MCF 10A (cell line): ENCODE measurements at regions of chr6 and their contacts with region 1.

Region 1: DNA sequence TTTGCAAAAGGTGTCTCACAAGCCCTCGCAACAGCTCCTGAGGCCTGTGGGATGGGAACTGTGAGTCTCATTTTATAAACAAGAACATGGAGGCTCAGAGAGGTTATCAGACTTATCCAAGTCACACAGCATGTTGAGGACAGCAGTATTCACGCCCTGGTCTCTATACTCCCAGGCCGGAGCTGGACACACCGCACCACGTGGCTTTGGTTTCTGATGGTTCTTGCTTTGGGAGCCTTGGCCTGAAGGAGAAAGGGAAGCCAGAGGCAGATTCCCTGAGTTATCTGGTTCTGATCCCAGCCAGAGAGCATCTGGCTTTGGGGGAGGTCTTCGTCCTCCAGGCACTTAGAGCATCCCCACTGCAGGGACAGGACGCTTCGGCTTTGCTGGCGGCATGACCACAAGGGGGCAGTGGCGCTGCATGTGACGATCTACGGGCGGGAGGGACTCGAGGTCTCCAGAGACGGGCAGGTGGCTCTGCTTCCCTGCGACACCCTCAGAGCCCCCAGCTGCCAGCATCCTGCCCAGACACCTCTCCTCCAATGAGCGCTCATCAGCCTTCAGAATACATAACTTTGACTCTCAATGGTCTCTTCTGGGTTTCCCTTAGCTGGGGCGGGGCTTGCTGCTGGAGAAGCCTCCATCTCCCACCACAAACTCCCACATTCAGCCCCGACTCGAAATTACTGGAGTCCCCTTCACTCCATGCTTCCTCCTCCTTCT is 51.4 kb upstream of the SAYSD1 start:
- DNase-seq: peak; percentile 68
- H3K4me3 Mint-ChIP-seq: no peak overlapping the region
- H3K27ac Mint-ChIP-seq: no peak overlapping the region
- H3K4me1 Mint-ChIP-seq: peaks cover 18% of the 10 kb centered on the region
- H3K27me3 Mint-ChIP-seq: peaks cover 2% of the 10 kb centered on the region
- CTCF ChIP-seq: peak; percentile 99

Region 2: GRCh38 chr6:38871741-38872568 is 294.4 kb before region 1 on chr6:
- CTCF ChIA-PET with region 1: interaction called, 32 read pairs
- POLR2A ChIA-PET with region 1: no interaction called
- intact Hi-C with region 1: loop called (anchors 5 kb)
- DNase-seq: peak; percentile 66
- H3K4me3 Mint-ChIP-seq: no peak overlapping the region
- H3K27ac Mint-ChIP-seq: no peak overlapping the region
- H3K4me1 Mint-ChIP-seq: peaks cover 6% of the 10 kb centered on the region
- H3K27me3 Mint-ChIP-seq: no peaks in the 10 kb centered on the region
- CTCF ChIP-seq: peak; percentile 77

Region 3: DNA sequence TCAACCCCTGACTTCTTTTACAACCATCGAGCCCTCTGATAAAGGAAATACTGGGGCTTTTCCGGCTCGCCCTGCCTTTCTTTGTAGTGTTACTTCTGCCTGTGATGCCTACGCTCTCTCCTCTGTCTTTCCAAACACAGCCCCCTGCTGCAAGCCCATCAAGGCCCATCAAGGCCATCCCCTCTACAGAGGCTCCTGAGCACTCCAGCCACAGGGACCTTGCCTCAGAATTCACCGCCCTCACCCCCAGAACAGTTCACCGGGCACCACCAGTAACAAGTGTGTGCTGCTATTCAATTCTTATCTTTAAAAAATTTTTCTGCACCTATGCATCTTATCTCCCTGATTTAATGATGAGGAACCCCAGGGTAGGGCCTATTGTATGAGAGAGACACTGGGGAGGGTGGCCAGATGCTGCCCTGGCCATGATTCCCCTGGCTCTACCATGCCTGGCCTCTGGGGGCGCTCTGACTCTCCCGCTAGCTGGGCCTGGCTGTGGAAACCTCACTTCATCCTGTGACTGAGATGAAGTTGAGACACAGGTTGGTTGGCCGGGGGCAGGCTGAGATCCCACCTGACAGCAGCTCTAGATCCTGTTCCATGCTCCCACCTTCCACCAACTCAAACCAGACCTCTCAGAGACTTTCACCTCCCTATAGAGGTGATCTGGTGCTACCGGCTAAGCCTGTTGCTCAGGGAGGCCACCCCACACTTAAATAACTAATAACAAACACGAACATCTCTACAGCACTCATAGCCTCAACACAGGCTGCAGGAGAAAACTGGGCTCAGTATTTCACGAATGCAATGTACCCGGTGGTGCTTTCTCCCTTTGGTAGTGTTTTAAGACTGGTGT is 137.0 kb before region 1 on chr6:
- CTCF ChIA-PET with region 1: no interaction called
- POLR2A ChIA-PET with region 1: no interaction called
- intact Hi-C with region 1: loop called (anchors 5 kb)
- DNase-seq: peak; percentile 42
- H3K4me3 Mint-ChIP-seq: no peak overlapping the region
- H3K27ac Mint-ChIP-seq: no peak overlapping the region
- H3K4me1 Mint-ChIP-seq: no peaks in the 10 kb centered on the region
- H3K27me3 Mint-ChIP-seq: peaks cover 65% of the 10 kb centered on the region
- CTCF ChIP-seq: peak; percentile 75

Region 4: GRCh38 chr6:39189915-39190544 is 23.7 kb after region 1 on chr6:
- CTCF ChIA-PET with region 1: interaction called, 12 read pairs
- POLR2A ChIA-PET with region 1: interaction called, 3 read pairs
- intact Hi-C with region 1: loop called (anchors 2 kb)
- DNase-seq: peak; percentile 54
- H3K4me3 Mint-ChIP-seq: no peak overlapping the region
- H3K27ac Mint-ChIP-seq: peak overlapping the region; percentile 40
- H3K4me1 Mint-ChIP-seq: peaks cover 17% of the 10 kb centered on the region
- H3K27me3 Mint-ChIP-seq: no peaks in the 10 kb centered on the region
- CTCF ChIP-seq: peak; percentile 38

Region 5: DNA sequence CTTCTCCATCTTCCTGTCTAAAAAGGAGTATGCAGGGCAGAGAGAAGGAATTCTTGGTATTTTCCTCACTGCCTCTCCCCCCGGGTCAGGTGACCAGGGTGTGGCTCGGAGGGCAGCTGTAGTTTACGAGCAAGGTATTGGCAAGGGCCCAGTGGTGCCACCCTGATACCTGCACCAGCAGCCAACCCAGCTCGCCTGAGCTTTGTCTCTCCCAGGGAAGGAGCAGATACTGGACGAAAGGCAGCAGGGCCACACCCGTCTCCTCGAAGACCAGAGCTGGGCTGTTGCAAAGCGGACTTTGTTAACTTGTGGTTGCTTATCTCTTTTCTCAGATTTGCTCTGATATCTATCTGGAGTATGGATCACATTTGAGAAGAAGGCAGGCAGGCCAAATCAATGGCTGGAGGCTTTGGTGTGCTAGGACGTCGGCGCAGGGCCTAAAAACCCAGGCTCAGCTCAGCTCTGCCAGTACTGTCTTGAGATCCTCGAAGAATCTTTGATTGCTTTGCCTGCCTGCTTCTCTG is 37.6 kb after region 1 on chr6:
- CTCF ChIA-PET with region 1: interaction called, 10 read pairs
- POLR2A ChIA-PET with region 1: interaction called, 3 read pairs
- intact Hi-C with region 1: no loop called
- DNase-seq: peak; percentile 84
- H3K4me3 Mint-ChIP-seq: no peak overlapping the region
- H3K27ac Mint-ChIP-seq: peak overlapping the region; percentile 59
- H3K4me1 Mint-ChIP-seq: peaks cover 20% of the 10 kb centered on the region
- H3K27me3 Mint-ChIP-seq: no peaks in the 10 kb centered on the region
- CTCF ChIP-seq: no peak

Region 6: DNA sequence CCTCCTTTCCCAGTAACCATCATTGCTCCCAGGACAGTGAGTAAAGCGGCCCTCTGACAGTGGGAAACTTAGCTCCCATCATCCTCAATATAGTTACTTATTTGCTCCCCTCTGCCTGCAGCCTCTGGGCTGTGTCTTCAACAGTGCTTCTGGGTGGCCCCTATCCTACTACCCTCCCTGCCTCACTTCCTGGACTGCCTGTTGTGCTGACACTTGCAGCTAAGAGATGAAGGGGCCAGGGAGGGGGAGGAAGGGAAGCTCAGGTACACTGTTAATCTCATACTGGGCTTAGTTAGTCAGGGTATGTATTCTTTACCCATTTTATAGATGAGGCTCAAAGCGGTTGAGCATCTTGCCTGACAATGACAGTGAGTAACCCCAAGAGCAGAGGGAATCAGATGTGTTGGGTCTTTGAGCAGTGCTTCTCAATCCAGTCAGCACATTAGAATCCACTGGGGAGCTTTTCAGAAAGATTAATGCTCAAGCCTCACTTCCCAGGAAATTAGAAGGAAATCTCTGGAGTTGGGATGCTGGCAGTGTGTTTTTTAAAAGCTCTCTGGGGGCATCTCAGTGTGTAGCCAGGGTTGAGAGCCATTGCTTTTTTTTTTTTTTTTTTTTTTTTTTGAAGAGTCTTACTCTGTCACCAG is 90.1 kb after region 1 on chr6:
- CTCF ChIA-PET with region 1: interaction called, 14 read pairs
- POLR2A ChIA-PET with region 1: no interaction called
- intact Hi-C with region 1: no loop called
- DNase-seq: no peak
- H3K4me3 Mint-ChIP-seq: no peak overlapping the region
- H3K27ac Mint-ChIP-seq: no peak overlapping the region
- H3K4me1 Mint-ChIP-seq: no peaks in the 10 kb centered on the region
- H3K27me3 Mint-ChIP-seq: peaks cover 30% of the 10 kb centered on the region
- CTCF ChIP-seq: no peak

Region 7: DNA sequence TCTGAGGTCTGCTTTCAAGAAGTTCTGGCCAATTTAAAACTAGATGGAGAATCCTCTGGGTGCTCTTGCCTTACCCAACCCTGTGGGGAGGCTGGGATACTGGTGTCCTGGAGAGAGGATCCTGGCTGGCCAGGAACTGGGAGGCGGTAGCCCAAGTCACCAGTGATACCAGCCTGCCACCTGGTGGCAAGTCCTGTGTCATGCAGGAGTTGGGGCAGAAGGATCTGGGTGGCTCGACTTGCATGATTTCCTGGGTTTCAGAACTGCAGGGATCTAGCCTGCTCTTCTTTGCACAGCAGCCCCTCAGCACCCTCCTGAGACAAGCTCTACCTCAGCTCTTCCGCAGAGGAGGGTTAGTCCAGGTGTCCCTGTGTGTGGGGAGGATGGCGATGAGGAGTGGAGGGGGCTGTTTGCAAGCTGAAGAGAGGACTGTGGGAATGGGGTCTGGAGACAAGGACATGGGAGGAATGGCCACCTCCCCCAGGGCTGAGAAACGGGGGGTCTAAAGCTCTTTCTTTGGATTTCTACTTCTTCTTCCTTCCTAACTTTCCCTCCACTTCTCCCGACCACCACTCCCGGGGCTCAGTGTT is 143.7 kb after region 1 on chr6:
- CTCF ChIA-PET with region 1: interaction called, 625 read pairs
- POLR2A ChIA-PET with region 1: interaction called, 3 read pairs
- intact Hi-C with region 1: loop called (anchors 1 kb)
- DNase-seq: peak; percentile 78
- H3K4me3 Mint-ChIP-seq: no peak overlapping the region
- H3K27ac Mint-ChIP-seq: no peak overlapping the region
- H3K4me1 Mint-ChIP-seq: no peaks in the 10 kb centered on the region
- H3K27me3 Mint-ChIP-seq: peaks cover 14% of the 10 kb centered on the region
- CTCF ChIP-seq: peak; percentile 95